Activated CD4-positive, alpha-beta T cell treated with anti-CD3 and anti-CD28 coated beads for 36 hours (primary cell): ENCODE measurements at regions of chr14 and their contacts with region 1.

Region 1: GRCh38 chr14:50085570-50086320 is 30.6 kb downstream of the VCPKMT start:
- DNase-seq: peak; percentile 71
- ATAC-seq: peak; percentile 27
- H3K4me3 Mint-ChIP-seq: peak overlapping the region; percentile 45
- H3K27ac Mint-ChIP-seq: peak overlapping the region; percentile 94
- H3K4me1 Mint-ChIP-seq: peaks cover 94% of the 10 kb centered on the region
- H3K27me3 Mint-ChIP-seq: no peaks in the 10 kb centered on the region

Region 2: DNA sequence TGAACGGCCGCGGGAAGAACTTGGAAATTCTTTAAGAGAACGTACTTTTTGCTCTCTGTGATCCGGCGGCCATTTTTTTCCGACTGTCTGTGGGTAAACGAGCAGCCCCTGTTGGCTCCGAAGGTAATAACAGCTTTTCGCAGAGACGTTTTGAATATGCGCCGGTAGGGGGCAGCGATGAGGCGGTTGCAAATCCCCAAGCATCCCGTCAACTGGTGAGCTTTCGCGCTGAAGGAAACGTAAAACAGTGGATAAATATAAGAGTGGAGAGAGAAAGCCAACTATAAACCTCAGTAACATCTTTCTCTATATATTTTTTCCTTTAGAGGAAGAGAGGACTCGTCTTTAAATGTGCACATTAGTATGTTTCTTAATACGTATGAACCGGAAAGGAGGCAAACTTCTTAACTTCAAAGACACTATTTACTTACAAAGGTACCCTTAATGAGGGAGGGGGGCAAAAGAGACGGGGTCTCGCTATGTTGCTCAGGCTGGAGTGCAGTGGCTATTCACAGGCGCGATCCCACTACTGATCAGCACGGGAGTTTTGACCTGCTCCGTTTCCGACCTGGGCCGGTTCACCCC is 223.6 kb before region 1 on chr14:
- CTCF ChIA-PET with region 1: interaction called, 13 read pairs
- POLR2A ChIA-PET with region 1: interaction called, 10 read pairs
- intact Hi-C with region 1: loop called (anchors 1 to 2 kb)
- DNase-seq: peak; percentile 92
- ATAC-seq: peak; percentile 13
- H3K4me3 Mint-ChIP-seq: no peak overlapping the region
- H3K27ac Mint-ChIP-seq: no peak overlapping the region
- H3K4me1 Mint-ChIP-seq: peaks cover 20% of the 10 kb centered on the region
- H3K27me3 Mint-ChIP-seq: no peaks in the 10 kb centered on the region

Region 3: GRCh38 chr14:49879683-49880204 is 206.0 kb before region 1 on chr14:
- CTCF ChIA-PET with region 1: interaction called, 10 read pairs
- POLR2A ChIA-PET with region 1: interaction called, 3 read pairs
- intact Hi-C with region 1: no loop called
- DNase-seq: peak; percentile 85
- ATAC-seq: peak; percentile 92
- H3K4me3 Mint-ChIP-seq: no peak overlapping the region
- H3K27ac Mint-ChIP-seq: peak overlapping the region; percentile 47
- H3K4me1 Mint-ChIP-seq: peaks cover 27% of the 10 kb centered on the region
- H3K27me3 Mint-ChIP-seq: no peaks in the 10 kb centered on the region

Region 4: DNA sequence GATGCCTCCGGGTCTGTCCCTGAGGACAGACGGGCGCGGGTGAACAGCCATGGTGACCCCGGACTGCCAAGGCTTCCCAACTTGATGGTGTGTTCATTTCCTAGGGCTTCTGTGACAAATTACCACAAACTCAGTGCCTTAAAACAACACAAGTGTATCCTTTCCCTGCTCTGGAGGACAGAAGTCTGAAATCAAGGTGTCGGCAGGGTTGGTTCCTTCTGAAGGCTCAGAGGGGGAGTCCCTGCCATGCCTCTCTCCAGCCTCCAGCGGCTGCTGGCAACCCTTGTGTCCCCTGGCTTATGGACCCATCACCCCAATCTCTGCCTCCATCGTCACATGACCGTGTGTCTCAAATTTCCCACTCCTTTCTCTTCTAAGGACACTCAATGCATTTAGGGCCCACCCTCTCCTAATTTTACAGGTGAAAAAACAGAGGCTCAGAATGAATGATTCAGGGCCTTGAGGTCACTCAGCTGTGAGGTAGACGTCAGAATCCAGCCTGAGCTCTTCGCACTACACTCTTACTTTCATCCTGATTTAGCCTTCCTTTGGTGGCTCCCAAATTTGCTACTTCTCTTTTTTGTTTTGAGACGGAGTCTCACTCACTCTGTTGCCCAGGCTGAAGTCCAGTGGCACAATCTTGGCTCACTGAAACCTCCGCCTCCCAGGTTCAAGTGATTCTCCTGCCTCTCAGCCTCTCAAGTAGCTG is 14.8 kb before region 1 on chr14:
- CTCF ChIA-PET with region 1: interaction called, 14 read pairs
- POLR2A ChIA-PET with region 1: interaction called, 10 read pairs
- intact Hi-C with region 1: loop called in 1 of 2 experiments (anchors 1 kb)
- DNase-seq: no peak
- ATAC-seq: no peak
- H3K4me3 Mint-ChIP-seq: no peak overlapping the region
- H3K27ac Mint-ChIP-seq: peak overlapping the region; percentile 7
- H3K4me1 Mint-ChIP-seq: peaks cover 63% of the 10 kb centered on the region
- H3K27me3 Mint-ChIP-seq: no peaks in the 10 kb centered on the region

Region 5: DNA sequence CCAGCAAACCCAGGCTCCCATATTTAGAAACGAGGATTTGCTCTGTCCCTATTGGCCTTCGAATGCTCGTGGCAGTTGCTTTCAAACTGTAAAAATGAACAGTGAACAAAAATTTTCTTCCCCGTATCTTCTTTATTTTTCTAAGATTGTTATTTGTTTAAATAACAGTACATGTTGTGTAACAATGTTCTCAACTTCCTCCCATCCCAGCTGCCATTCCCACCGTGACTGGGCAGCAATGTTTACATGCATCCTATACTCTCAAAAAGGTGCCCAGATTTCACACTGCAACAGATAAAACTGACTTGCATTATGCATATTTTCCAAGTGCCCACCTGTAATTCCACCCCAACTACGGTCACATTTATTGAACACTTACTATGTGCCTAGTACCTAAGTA is 17.8 kb after region 1 on chr14:
- CTCF ChIA-PET with region 1: interaction called, 32 read pairs
- POLR2A ChIA-PET with region 1: interaction called, 6 read pairs
- intact Hi-C with region 1: loop called (anchors 1 kb)
- DNase-seq: no peak
- ATAC-seq: no peak
- H3K4me3 Mint-ChIP-seq: peak overlapping the region; percentile 64
- H3K27ac Mint-ChIP-seq: peak overlapping the region; percentile 83
- H3K4me1 Mint-ChIP-seq: peaks cover 48% of the 10 kb centered on the region
- H3K27me3 Mint-ChIP-seq: no peaks in the 10 kb centered on the region